ENCODE measurements at regions of chr14 and their contacts with region 1.

Region 1: GRCh38 chr14:104137297-104138097 is 890 bp upstream of the KIF26A start:
- DNase-seq: peak; percentile 15 to 75 (median 55)
- ATAC-seq: peak; percentile 67
- H3K4me3 ChIP-seq: peak overlapping the region; percentile 29
- H3K4me3 Mint-ChIP-seq: peak overlapping the region; percentile 63
- H3K27ac ChIP-seq: no peak overlapping the region
- H3K27ac Mint-ChIP-seq: no peak overlapping the region
- H3K4me1 ChIP-seq: peaks cover 26% of the 10 kb centered on the region
- H3K4me1 Mint-ChIP-seq: peaks cover 4% of the 10 kb centered on the region
- H3K27me3 ChIP-seq: peaks cover 50 to 61% of the 10 kb centered on the region in 2 experiments
- H3K27me3 Mint-ChIP-seq: peaks cover 43% of the 10 kb centered on the region
- CTCF ChIP-seq: peak; percentile 83

Region 2: GRCh38 chr14:104399432-104400151 is 262.1 kb after region 1 on chr14:
- CTCF ChIA-PET with region 1: no interaction called
- POLR2A ChIA-PET with region 1: no interaction called
- intact Hi-C with region 1: loop called (anchors 1 to 5 kb)
- DNase-seq: peak in 6 of 14 experiments; percentile 33 to 74 (median 58)
- ATAC-seq: peak; percentile 82
- H3K4me3 ChIP-seq: no peak overlapping the region
- H3K4me3 Mint-ChIP-seq: no peak overlapping the region
- H3K27ac ChIP-seq: no peak overlapping the region
- H3K27ac Mint-ChIP-seq: peak overlapping the region; percentile 52
- H3K4me1 ChIP-seq: peaks cover 37% of the 10 kb centered on the region
- H3K4me1 Mint-ChIP-seq: peaks cover 44% of the 10 kb centered on the region
- H3K27me3 ChIP-seq: no peaks in the 10 kb centered on the region
- H3K27me3 Mint-ChIP-seq: no peaks in the 10 kb centered on the region
- CTCF ChIP-seq: peak; percentile 30

Region 3: DNA sequence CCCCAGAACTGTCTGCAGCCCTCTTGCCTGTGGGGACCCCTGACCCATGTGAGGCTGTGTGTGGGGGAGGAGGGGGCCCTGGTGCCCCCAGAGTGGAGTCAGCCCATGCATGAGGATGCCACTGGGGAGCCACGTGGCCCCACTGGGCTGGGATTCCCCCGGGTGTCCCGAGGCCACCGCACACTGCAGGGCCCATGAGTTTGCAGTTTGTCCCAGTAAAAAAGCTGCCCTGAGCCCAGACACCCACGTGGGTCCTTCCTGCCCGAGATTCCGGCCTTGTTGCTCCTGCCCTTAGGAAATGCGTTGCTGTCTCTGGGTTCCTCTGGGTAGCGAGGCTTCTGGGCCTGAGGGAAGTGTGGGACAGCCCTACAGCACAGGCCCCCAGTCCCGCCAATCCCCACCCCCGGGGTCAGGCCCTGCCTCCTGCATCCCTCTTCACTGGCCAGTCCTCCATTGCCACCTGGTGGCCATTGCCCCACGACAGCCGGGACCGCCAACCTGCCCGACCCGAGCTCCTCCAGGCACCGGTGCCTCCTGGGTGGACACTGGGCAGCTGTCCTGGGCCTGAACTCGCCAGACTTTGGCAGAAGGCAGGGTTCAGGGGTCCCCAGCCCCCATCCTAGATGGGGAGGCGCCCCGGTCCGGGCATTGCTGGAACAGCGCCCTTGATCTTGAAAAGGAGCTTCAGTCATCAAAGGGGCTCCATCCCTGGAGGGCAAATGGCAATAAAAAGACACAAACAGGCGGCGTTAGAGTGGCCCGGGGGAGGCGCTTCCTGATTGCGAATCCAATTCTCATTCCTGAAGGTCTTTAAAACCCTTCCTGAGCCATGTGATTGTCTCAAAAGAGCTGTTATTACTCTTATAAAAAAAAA is 426.5 kb after region 1 on chr14:
- CTCF ChIA-PET with region 1: interaction called, 6 read pairs
- POLR2A ChIA-PET with region 1: interaction called, 7 read pairs
- intact Hi-C with region 1: loop called in 1 of 2 experiments (anchors 1 kb)
- DNase-seq: peak; percentile 57 to 80 (median 66)
- ATAC-seq: peak; percentile 82
- H3K4me3 ChIP-seq: no peak overlapping the region
- H3K4me3 Mint-ChIP-seq: no peak overlapping the region
- H3K27ac ChIP-seq: no peak overlapping the region
- H3K27ac Mint-ChIP-seq: no peak overlapping the region
- H3K4me1 ChIP-seq: peaks cover 7% of the 10 kb centered on the region
- H3K4me1 Mint-ChIP-seq: no peaks in the 10 kb centered on the region
- H3K27me3 ChIP-seq: peaks cover 5 to 19% of the 10 kb centered on the region in 2 experiments
- H3K27me3 Mint-ChIP-seq: peaks cover 16% of the 10 kb centered on the region
- CTCF ChIP-seq: peak; percentile 74

Region 4: DNA sequence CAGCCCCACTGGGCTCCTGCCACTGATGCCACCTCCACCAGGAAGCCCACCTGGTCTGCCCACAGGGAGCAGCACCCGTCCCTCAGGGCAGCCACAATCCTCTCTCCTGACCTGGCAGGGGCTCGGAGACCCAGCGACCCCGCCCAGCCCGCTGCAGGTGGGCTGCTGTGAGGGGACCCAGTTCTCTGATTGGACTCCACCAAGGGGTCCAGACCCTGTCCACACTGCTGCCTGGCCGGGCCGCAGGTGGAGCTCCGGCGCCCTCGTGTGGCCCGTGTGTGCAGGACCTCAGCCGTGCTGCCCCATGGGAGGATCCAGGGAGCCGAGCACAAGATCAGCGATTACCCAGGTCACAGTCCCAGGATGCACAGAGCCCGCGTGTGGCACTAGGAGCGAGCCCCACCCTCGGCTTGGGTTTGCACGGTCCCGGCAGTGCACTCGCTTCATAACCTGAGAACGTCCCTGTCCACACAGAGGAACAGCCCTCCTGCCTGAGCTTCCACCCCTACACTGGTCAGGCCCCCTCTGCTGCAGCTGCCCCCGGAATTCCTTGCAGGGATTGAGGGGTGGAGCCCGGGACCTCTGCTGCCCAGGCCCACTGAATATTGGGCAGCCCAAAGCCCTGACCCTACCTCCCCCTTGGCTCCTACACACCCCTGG is 502.5 kb after region 1 on chr14:
- CTCF ChIA-PET with region 1: interaction called, 3 read pairs
- POLR2A ChIA-PET with region 1: no interaction called
- intact Hi-C with region 1: loop called in 1 of 2 experiments (anchors 2 kb)
- DNase-seq: peak in 12 of 14 experiments; percentile 18 to 68 (median 38)
- ATAC-seq: peak; percentile 73
- H3K4me3 ChIP-seq: no peak overlapping the region
- H3K4me3 Mint-ChIP-seq: no peak overlapping the region
- H3K27ac ChIP-seq: no peak overlapping the region
- H3K27ac Mint-ChIP-seq: no peak overlapping the region
- H3K4me1 ChIP-seq: peaks cover 6% of the 10 kb centered on the region
- H3K4me1 Mint-ChIP-seq: peaks cover 4% of the 10 kb centered on the region
- H3K27me3 ChIP-seq: peaks cover 6 to 13% of the 10 kb centered on the region in 2 experiments
- H3K27me3 Mint-ChIP-seq: peaks cover 15% of the 10 kb centered on the region
- CTCF ChIP-seq: peak; percentile 66

Region 5: DNA sequence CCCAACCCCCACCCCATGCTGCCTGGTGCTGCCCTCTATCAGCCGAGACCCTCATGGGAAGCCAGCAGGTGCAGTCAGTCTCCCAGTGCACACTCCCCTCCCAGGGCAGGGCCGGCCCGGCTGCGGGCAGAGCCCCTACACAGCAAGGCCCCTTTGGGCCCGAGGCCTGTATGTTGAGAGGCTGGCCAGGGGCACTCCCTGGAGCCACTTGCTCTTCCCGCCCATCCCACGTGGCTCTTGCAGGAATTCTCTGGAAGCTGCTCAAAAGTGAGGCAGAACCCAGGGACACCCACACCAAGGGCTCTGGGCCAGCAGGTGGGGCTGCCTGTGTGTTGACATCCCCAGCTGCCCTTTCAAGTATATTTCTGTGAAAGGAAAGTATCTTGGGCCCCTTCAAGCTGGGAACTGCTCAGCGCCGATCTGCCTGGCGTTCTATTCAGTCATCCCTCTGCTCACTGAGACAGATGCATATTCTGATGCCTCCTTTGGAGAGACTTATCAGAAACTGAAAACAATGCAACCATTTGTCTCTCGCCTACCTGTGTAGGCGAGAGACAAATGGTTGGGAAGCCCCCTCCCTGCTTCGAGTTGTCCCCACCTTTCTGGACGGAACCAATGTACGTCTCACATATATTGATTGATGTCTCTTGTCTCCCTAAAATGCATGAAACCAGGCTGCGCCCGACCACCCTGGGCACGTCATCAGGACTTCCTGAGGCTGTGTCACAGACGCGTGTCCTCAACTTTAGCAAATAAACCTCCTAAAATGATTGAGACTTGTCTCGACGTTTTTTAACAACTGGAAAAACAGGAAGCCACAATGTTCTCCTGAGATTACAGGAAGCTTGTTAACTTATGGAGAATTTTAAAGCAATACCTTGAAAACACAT is 921.8 kb after region 1 on chr14:
- CTCF ChIA-PET with region 1: no interaction called
- POLR2A ChIA-PET with region 1: no interaction called
- intact Hi-C with region 1: no loop called
- DNase-seq: peak in 11 of 14 experiments; percentile 27 to 86 (median 74)
- ATAC-seq: peak; percentile 77
- H3K4me3 ChIP-seq: peak overlapping the region; percentile 82
- H3K4me3 Mint-ChIP-seq: peak overlapping the region; percentile 89
- H3K27ac ChIP-seq: peak overlapping the region; percentile 86 to 95
- H3K27ac Mint-ChIP-seq: peak overlapping the region; percentile 91
- H3K4me1 ChIP-seq: peaks cover 63% of the 10 kb centered on the region
- H3K4me1 Mint-ChIP-seq: peaks cover 53% of the 10 kb centered on the region
- H3K27me3 ChIP-seq: no peaks in the 10 kb centered on the region
- H3K27me3 Mint-ChIP-seq: no peaks in the 10 kb centered on the region
- CTCF ChIP-seq: peak; percentile 35